ENCODE measurements at regions of chr3 and their contacts with region 1.

Region 1: GRCh38 chr3:187974871-187975271 is 179.1 kb upstream of the LPP start:
- DNase-seq: peak; percentile 79
- H3K4me3 ChIP-seq: peak overlapping the region; percentile 54
- H3K27ac ChIP-seq: peak overlapping the region; percentile 99
- H3K4me1 ChIP-seq: peaks cover 100% of the 10 kb centered on the region
- CTCF ChIP-seq: peak; percentile 84

Region 2: DNA sequence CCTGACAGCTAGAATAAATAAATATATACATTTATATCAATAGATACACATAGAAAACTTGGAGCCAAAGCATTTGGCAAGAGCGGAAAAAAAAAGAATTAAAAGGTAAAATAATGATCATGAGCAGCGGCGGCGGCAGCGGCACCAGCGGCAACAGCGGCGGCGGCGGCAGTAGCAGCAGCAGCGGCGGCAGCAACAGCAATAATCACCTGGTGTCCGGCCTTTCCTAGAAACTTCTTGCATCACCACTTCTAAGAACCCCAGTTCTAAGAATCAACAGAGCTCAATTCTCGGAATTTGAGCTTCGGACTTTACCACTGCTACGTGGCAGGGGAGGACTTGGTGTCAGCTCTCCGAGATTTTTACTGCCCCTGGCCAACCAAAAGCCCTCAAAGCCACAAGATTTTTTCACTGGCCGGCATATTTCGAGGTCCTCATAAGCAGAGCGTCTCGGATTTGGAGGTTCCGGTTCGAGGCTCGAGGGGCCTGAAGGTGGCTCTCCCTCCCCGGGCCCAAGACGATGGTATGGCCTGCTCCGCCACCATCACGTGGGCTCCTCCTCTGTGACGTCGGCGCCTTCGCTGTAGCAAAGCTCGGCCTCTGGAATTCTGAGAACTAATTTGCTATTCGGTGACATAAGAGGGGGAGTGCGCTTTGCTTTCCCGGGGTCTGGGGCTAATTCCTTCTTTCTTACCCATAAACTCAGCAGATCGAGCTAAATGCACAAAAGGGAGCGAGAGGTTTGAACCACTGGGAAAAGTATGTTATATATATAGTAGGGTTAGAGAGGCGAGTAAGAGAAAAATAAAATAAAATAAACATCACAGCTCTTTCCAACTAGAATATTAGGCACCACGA is 229.4 kb before region 1 on chr3 and contains the start of gene BCL6:
- CTCF ChIA-PET with region 1: interaction called, 5 read pairs
- POLR2A ChIA-PET with region 1: interaction called, 531 read pairs
- intact Hi-C with region 1: loop called (anchors 2 kb)
- DNase-seq: peak; percentile 98
- H3K4me3 ChIP-seq: peak within 1 kb of the TSS; percentile 86
- H3K27ac ChIP-seq: peak within 1 kb of the TSS; percentile 90
- H3K4me1 ChIP-seq: peaks cover 39% of the 10 kb centered on the region
- CTCF ChIP-seq: no peak
- total RNA-seq, gene BCL6: 62.4 and 65.6 TPM in 2 replicates

Region 3: GRCh38 chr3:187963677-187964385 is 11.0 kb before region 1 on chr3:
- CTCF ChIA-PET with region 1: interaction called, 7 read pairs
- POLR2A ChIA-PET with region 1: interaction called, 278 read pairs
- intact Hi-C with region 1: loop called (anchors 2 kb)
- DNase-seq: peak; percentile 48
- H3K4me3 ChIP-seq: peak overlapping the region; percentile 1
- H3K27ac ChIP-seq: peak overlapping the region; percentile 99
- H3K4me1 ChIP-seq: peaks cover 100% of the 10 kb centered on the region
- CTCF ChIP-seq: no peak

Region 4: GRCh38 chr3:188082031-188082430 is 107.2 kb after region 1 on chr3:
- CTCF ChIA-PET with region 1: interaction called, 4 read pairs
- POLR2A ChIA-PET with region 1: interaction called, 174 read pairs
- intact Hi-C with region 1: loop called (anchors 1 kb)
- DNase-seq: no peak
- H3K4me3 ChIP-seq: no peak overlapping the region
- H3K27ac ChIP-seq: no peak overlapping the region
- H3K4me1 ChIP-seq: peaks cover 56% of the 10 kb centered on the region
- CTCF ChIP-seq: no peak

Region 5: DNA sequence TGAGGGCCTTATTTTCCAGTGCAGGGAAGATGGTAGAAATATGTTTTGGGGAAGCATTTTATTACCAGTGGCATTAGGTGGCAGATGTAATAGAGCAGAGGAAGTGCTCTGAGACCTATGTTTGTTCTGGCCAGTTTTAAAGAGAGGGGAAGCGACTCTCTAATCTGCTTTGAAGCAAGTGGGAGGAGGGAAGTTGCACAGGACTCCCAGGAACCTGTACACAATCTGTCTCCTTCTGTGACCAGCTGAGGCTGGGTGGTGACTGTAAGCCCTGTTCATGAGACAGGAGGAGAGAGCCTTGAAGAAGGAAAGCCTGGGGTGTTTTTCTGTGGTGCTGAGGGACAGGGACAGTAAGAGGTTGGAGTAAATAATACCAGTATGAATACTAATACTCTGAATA is 239.6 kb after region 1 on chr3:
- CTCF ChIA-PET with region 1: no interaction called
- POLR2A ChIA-PET with region 1: interaction called, 9 read pairs
- intact Hi-C with region 1: loop called (anchors 2 kb)
- DNase-seq: peak; percentile 82
- H3K4me3 ChIP-seq: peak overlapping the region; percentile 47
- H3K27ac ChIP-seq: peak overlapping the region; percentile 98
- H3K4me1 ChIP-seq: peaks cover 80% of the 10 kb centered on the region
- CTCF ChIP-seq: no peak

Region 6: DNA sequence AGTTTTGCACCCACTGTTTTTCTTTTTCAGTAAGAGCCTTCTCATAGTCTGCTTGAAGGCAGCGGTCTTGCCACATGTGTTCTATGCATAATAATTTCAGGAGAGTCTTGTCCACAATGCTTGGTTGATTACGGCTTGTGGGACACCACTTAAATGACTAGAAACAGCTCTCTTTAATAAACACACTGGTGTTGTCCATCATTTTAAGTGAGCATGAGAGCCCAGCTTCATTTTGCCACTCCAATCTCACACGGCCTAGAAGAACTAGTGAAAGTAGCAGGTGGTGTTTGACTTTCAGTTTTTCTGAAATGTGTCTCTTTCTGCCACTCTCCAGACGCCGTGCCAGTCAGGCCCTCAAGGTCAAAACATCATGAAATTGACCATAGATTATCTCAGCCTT is 471.1 kb after region 1 on chr3:
- CTCF ChIA-PET with region 1: no interaction called
- POLR2A ChIA-PET with region 1: no interaction called
- intact Hi-C with region 1: loop called (anchors 5 kb)
- DNase-seq: peak; percentile 90
- H3K4me3 ChIP-seq: peak overlapping the region; percentile 46
- H3K27ac ChIP-seq: peak overlapping the region; percentile 88
- H3K4me1 ChIP-seq: peaks cover 48% of the 10 kb centered on the region
- CTCF ChIP-seq: no peak

Region 7: DNA sequence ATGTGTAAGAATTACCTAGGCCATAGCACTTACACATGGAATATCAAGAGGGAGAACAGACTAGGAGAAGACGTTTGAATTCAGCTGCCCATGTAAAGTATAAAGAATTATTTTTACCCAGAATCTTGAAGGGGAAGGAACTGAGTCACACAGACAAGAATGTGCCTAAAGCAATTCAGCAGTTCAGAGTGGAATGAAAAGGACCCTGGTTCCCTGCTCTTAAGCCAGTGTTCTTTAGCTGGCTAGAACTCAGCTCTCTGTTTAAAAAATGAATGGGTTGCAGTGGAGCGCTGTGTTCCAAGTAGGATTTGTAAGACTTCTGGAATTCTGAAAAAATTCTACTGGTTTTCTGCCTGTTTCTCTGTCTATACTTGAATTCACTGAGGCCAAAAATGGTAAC is 619.3 kb after region 1 on chr3:
- CTCF ChIA-PET with region 1: no interaction called
- POLR2A ChIA-PET with region 1: no interaction called
- intact Hi-C with region 1: no loop called
- DNase-seq: no peak
- H3K4me3 ChIP-seq: no peak overlapping the region
- H3K27ac ChIP-seq: no peak overlapping the region
- H3K4me1 ChIP-seq: peaks cover 3% of the 10 kb centered on the region
- CTCF ChIP-seq: no peak

Region 8: DNA sequence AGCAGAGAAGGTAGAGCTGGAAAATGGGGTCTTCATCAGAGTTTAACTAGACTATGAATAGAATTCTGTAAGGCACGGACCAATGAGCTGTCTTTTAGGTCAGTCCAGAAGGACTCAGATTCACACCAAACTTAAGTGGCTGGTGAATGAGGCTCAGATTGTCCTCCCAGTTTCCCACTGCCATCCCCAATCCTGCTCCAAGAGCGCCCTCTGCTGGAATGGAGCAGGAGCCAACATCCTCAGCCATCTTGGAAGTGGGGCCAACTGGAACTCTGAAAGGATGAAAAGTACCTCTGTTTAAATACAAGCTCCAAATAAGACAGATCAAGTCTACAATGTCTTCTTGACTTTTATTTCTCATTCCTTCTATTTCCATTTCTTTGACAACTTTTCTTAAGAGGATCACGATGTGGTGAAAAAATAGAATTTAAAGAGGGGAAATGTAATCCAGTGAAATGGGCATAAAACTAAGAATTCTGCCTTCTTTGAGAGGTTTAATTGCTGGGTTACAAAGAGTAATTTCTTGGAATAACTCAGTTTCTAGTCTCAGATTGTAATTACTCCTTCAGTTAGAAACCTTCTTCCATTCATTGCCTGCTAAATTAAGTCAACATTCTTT is 979.8 kb after region 1 on chr3:
- CTCF ChIA-PET with region 1: no interaction called
- POLR2A ChIA-PET with region 1: interaction called, 6 read pairs
- intact Hi-C with region 1: loop called (anchors 2 kb)
- DNase-seq: peak; percentile 84
- H3K4me3 ChIP-seq: no peak overlapping the region
- H3K27ac ChIP-seq: no peak overlapping the region
- H3K4me1 ChIP-seq: peaks cover 12% of the 10 kb centered on the region
- CTCF ChIP-seq: peak; percentile 99

Measured in OCI-LY7 (cell line).